B cell (primary cell): ENCODE measurements at regions of chr17 and their contacts with region 1.

Region 1: GRCh38 chr17:41738077-41738735 is 3.8 kb upstream of the HAP1 start:
- DNase-seq: peak; percentile 88
- ATAC-seq: peak; percentile 90
- H3K4me3 ChIP-seq: no peak overlapping the region
- H3K4me3 Mint-ChIP-seq: no peak overlapping the region
- H3K27ac ChIP-seq: no peak overlapping the region
- H3K27ac Mint-ChIP-seq: no peak overlapping the region
- H3K4me1 ChIP-seq: peaks cover 23 to 25% of the 10 kb centered on the region in 2 donors
- H3K4me1 Mint-ChIP-seq: peaks cover 11% of the 10 kb centered on the region
- H3K27me3 ChIP-seq: peaks cover 0 to 42% (median 27%) of the 10 kb centered on the region in 4 experiments
- H3K27me3 Mint-ChIP-seq: peaks cover 28% of the 10 kb centered on the region
- CTCF ChIP-seq: peak; percentile 99

Region 2: DNA sequence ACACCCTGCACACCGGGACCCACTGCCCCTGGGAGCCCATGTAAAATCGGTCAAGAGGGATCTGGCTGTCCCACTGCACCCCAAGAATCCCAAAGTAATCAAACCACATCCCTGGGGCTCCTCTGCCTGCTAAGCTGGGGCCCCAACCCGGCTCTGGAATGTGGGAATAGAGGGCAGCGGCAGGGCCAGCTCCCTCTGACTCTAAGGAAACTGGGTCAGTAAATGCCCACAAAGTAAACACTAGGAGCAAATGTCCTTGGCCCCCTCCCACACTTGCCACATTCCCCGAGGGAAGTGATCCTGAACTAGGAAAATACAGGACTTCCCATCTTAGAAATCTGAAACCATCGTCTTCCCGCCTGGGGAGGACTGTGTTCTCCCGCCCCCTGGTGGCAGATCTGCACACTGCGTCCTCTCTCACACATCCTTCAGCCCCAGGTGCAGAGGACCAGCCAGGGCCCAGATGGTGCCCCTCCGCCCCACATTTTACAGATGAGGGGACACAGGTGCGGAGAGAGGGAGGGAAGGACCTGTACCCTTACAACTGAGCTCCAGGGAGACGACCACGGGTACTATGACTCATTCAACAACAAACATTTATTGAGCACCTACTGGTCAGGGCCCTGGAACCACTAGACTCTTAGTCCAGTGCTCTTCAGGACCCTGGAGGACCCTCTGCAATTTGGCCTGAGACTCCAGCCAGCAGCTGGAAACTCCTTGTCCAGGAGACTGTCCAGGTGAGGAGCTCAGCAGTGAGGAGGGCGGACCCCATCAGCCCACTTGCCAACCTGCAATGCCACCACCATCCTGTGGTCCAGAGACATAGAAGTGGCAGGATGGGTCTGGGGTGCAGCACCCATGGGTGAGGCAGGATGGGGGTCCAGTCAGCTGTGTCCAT is 63.4 kb after region 1 on chr17:
- CTCF ChIA-PET with region 1: interaction called, 100 read pairs
- POLR2A ChIA-PET with region 1: no interaction called
- intact Hi-C with region 1: loop called (anchors 1 kb)
- DNase-seq: peak; percentile 84
- ATAC-seq: peak; percentile 86
- H3K4me3 ChIP-seq: no peak overlapping the region
- H3K4me3 Mint-ChIP-seq: no peak overlapping the region
- H3K27ac ChIP-seq: no peak overlapping the region
- H3K27ac Mint-ChIP-seq: peak overlapping the region; percentile 5
- H3K4me1 ChIP-seq: peaks cover 7 to 22% of the 10 kb centered on the region in 2 donors
- H3K4me1 Mint-ChIP-seq: peaks cover 16% of the 10 kb centered on the region
- H3K27me3 ChIP-seq: no peaks in the 10 kb centered on the region
- H3K27me3 Mint-ChIP-seq: no peaks in the 10 kb centered on the region
- CTCF ChIP-seq: peak; percentile 99

Region 3: GRCh38 chr17:41811549-41812380 is 73.6 kb after region 1 on chr17 and contains the start of gene P3H4:
- CTCF ChIA-PET with region 1: interaction called, 100 read pairs
- POLR2A ChIA-PET with region 1: no interaction called
- intact Hi-C with region 1: loop called (anchors 2 kb)
- DNase-seq: peak; percentile 88
- ATAC-seq: peak; percentile 91
- H3K4me3 ChIP-seq: peak within 1 kb of the TSS; percentile 23 to 85 (median 60)
- H3K4me3 Mint-ChIP-seq: peak within 1 kb of the TSS; percentile 96
- H3K27ac ChIP-seq: no peak within 1 kb of the TSS
- H3K27ac Mint-ChIP-seq: peak within 1 kb of the TSS; percentile 83
- H3K4me1 ChIP-seq: peaks cover 20% of the 10 kb centered on the region in 2 donors
- H3K4me1 Mint-ChIP-seq: peaks cover 19% of the 10 kb centered on the region
- H3K27me3 ChIP-seq: peaks cover 0 to 25% (median 5%) of the 10 kb centered on the region in 4 experiments
- H3K27me3 Mint-ChIP-seq: peaks cover 6% of the 10 kb centered on the region
- CTCF ChIP-seq: peak; percentile 82
- total RNA-seq, gene P3H4: 2.5 and 2.8 TPM in 2 replicates

Region 4: GRCh38 chr17:41885733-41886132 is 147.5 kb after region 1 on chr17:
- CTCF ChIA-PET with region 1: interaction called, 5 read pairs
- POLR2A ChIA-PET with region 1: no interaction called
- intact Hi-C with region 1: loop called (anchors 1 kb)
- DNase-seq: no peak
- ATAC-seq: no peak
- H3K4me3 ChIP-seq: no peak overlapping the region
- H3K4me3 Mint-ChIP-seq: no peak overlapping the region
- H3K27ac ChIP-seq: no peak overlapping the region
- H3K27ac Mint-ChIP-seq: no peak overlapping the region
- H3K4me1 ChIP-seq: no peaks in the 10 kb centered on the region
- H3K4me1 Mint-ChIP-seq: peaks cover 3% of the 10 kb centered on the region
- H3K27me3 ChIP-seq: no peaks in the 10 kb centered on the region
- H3K27me3 Mint-ChIP-seq: no peaks in the 10 kb centered on the region
- CTCF ChIP-seq: no peak

Region 5: DNA sequence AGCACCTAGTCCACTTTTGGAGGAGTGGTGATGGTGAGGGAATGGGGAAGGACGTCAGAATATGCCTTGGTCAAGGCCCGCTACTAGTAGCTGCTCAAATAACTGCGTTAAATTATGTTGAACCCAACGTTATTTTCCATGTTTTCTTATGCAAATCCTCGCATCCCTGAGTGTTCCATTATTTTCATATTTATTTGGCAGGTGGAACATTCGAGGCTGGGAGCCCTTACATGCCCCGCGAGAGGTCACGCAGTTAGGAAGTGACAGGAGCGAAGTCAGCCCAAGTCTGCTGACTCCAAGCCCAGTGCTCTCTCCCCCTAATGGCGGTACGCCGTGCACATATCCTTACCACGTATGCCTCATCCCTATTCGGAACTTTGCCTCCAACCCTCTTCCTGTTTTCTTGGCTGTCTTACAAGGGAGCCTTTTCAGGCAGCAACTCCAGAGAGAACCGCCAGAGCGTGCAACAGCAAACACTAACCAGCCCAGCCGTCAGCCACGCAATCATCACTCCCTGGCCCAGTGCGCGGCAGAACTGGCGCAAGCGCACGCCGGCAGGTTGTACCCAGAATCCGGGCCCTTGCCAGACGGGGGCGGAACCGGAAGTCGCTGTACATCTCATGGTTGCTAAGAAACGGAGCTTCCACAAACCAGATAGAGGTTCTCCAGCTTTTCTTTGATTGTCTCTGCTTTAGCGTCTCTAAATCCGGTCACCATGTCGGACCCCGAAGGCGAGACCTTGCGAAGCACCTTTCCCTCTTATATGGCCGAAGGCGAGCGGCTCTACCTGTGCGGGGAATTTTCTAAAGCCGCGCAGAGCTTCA is 192.0 kb after region 1 on chr17 and contains the start of gene ODAD4:
- CTCF ChIA-PET with region 1: no interaction called
- POLR2A ChIA-PET with region 1: interaction called, 10 read pairs
- intact Hi-C with region 1: no loop called
- DNase-seq: peak; percentile 95
- ATAC-seq: peak; percentile 99
- H3K4me3 ChIP-seq: peak within 1 kb of the TSS; percentile 46 to 92 (median 81)
- H3K4me3 Mint-ChIP-seq: peak within 1 kb of the TSS; percentile 96
- H3K27ac ChIP-seq: peak within 1 kb of the TSS; percentile 60 to 83
- H3K27ac Mint-ChIP-seq: peak within 1 kb of the TSS; percentile 88
- H3K4me1 ChIP-seq: peaks cover 10 to 32% of the 10 kb centered on the region in 2 donors
- H3K4me1 Mint-ChIP-seq: peaks cover 30% of the 10 kb centered on the region
- H3K27me3 ChIP-seq: no peaks in the 10 kb centered on the region
- H3K27me3 Mint-ChIP-seq: no peaks in the 10 kb centered on the region
- CTCF ChIP-seq: no peak
- total RNA-seq, gene ODAD4: 0.27 and 0.56 TPM in 2 replicates

Region 6: DNA sequence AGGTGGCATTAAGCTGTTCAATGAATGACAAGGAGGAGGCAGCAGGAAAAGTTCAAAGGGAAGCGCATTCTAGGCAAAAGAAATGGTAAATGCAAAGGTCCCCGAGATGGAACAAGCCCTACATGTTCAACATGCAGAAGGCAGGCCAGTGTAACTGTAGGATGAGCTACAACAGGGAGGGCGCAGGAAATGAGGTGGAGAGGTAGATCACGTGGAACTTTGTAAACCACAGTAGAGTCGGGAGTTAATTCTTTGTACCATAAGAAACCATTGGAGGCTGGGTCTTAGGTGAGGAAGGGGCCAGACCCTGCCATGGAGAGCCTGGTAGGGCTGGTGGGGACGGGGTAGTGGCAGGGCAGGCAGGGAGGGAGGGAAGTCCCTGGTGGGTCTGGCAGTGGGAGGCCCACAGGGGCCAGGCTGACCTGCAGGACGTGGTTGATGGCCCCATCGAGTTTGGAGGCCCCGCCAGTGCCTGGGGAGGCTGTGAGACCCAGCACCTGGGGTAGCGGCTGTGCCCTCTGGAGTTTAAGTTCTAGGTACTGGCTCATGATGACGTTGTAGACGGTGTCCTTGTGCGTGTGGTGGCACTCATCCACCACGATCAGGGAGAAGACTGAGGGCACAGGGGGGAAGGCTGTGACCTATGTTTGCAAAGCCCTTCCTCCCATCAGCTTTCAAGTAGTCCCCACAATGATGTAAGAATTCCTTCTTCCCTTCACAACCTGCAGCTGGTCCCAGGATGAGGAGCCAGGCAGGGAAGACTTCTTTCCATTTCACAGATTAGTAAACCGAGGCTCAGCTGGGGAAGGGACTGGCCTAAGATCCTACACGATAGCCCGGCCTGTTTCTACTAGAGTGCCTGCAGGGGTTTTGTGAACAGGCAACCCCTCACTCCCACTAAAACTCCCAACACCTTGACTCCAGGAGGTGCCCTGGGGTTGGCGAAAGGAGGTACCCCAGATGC is 372.4 kb after region 1 on chr17:
- CTCF ChIA-PET with region 1: no interaction called
- POLR2A ChIA-PET with region 1: no interaction called
- intact Hi-C with region 1: no loop called
- DNase-seq: peak; percentile 4
- ATAC-seq: no peak
- H3K4me3 ChIP-seq: no peak overlapping the region
- H3K4me3 Mint-ChIP-seq: peak overlapping the region; percentile 61
- H3K27ac ChIP-seq: peak overlapping the region in 1 of 2 donors; percentile 6
- H3K27ac Mint-ChIP-seq: peak overlapping the region; percentile 79
- H3K4me1 ChIP-seq: peaks cover 34 to 48% of the 10 kb centered on the region in 2 donors
- H3K4me1 Mint-ChIP-seq: peaks cover 51% of the 10 kb centered on the region
- H3K27me3 ChIP-seq: no peaks in the 10 kb centered on the region
- H3K27me3 Mint-ChIP-seq: no peaks in the 10 kb centered on the region
- CTCF ChIP-seq: no peak